ENCODE measurements at regions of chr12 and their contacts with region 1.

Region 1: DNA sequence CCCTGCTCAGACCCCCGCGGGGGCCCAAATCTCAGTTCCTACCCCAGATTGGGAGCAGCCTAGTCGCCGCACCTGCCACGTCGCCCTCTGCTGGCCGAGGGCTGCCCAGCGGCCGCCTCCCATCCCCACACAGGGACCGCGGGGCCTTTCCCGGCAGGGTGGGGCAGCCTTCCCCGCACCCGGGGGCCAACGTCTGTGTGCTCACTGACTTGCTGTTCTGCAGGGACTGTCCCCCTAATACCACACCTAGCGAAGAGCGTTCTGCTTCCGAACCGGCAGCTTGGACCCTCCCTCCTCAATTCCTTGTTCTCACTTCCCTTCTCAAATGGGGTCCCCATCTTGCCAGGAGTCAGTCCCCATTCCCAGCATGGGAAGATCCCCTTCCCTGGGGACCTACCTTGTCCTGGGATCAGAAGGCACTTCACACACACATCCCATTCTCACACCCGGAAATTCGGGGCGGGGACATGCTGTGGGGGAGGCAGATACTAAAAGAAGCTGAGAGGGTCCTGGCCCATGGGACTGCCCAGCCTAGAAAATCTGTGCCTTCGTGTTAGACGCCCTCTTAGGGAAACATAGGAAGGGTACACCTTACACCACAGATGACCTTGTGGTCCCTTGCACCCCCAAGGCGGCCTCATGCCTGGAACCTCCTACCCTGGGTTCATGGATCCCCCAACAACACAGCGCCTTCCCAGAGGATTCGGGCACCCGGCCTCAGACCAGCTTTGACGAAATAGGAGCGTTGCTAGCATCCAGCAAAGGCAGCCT is 16.4 kb downstream of the ACVRL1 start:
- DNase-seq: no peak
- H3K4me3 ChIP-seq: no peak overlapping the region
- CTCF ChIP-seq: peak; percentile 96

Region 2: GRCh38 chr12:51424662-51425438 is 498.8 kb before region 1 on chr12 and contains the start of gene SLC4A8:
- CTCF ChIA-PET with region 1: interaction called, 17 read pairs
- POLR2A ChIA-PET with region 1: no interaction called
- DNase-seq: no peak
- H3K4me3 ChIP-seq: peak within 1 kb of the TSS; percentile 85
- CTCF ChIP-seq: peak; percentile 94

Region 3: DNA sequence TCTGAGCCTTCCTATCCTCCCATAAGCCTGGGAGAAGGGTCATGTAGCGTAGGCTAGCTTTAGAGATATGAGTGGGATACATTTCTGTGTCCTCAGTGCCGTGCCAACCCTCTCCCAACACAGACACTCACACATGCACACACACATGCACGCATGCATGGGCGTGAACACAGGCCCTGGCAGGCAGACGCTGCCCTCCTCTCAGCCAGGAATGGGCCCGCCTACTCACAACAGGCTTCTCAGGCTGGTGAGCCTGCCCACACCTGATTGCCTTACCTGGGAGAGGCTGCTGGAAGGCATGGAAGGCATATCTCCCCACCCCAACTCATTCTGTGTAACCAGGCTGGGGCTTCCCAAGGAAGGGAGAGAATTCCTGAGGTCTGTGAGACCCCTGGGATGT is 15.0 kb after region 1 on chr12:
- CTCF ChIA-PET with region 1: interaction called, 73 read pairs
- POLR2A ChIA-PET with region 1: no interaction called
- DNase-seq: no peak
- H3K4me3 ChIP-seq: no peak overlapping the region
- CTCF ChIP-seq: no peak

Region 4: GRCh38 chr12:51970904-51971646 is 47.4 kb after region 1 on chr12:
- CTCF ChIA-PET with region 1: interaction called, 51 read pairs
- POLR2A ChIA-PET with region 1: no interaction called
- DNase-seq: no peak
- H3K4me3 ChIP-seq: no peak overlapping the region
- CTCF ChIP-seq: peak; percentile 61

Region 5: GRCh38 chr12:51994959-51995358 is 71.3 kb after region 1 on chr12:
- CTCF ChIA-PET with region 1: interaction called, 10 read pairs
- POLR2A ChIA-PET with region 1: no interaction called
- DNase-seq: no peak
- H3K4me3 ChIP-seq: no peak overlapping the region
- CTCF ChIP-seq: no peak